Psoas muscle (tissue), 8 donors: ENCODE measurements at regions of chr19 and their contacts with region 1.

Region 1: DNA sequence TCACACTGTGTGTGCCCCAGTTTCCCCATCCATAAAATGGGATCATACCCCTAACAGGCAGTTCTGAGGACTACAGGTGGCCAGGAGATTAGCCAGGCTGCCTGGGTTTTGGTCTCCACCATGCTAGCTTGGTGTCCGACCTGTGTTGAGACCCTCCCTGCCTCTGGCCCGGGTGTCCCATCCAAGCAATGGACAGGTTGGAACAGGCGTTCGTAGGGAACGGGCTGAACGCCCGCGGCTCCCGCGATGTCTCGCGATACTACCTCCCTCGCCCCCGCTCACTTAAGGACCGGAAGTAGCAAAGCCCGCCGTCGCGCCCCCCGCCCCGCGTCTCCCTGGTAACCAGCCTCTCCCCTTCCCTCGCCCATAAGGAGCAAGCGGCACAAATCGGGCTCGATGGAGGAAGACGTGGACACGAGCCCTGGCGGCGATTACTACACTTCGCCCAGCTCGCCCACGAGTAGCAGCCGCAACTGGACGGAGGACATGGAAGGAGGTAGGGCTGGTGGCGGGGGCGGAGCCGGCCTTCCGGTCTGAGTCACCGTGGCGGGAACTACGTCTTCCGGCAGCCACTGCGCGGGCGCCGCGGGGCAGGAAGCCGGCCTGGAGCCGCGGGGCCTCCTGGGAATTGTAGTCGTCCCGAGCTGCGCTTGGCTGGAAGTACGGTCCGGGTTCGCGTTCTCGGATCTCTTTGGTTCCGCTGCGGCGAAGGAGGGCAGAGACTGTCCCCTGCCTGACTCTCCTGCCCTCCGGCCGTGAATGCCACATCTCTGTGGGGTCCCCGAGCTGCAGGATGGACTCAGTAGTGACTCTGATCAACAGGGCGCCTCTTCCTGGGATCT is 45.4 kb downstream of the SMIM24 start:
- DNase-seq: peak; percentile 97 to 99
- ATAC-seq: peak; percentile 89 to 97 (median 90)
- H3K4me3 ChIP-seq: peak overlapping the region; percentile 62
- H3K27ac ChIP-seq: peak overlapping the region; percentile 90
- H3K4me1 ChIP-seq: peaks cover 34% of the 10 kb centered on the region
- H3K27me3 ChIP-seq: no peaks in the 10 kb centered on the region
- CTCF ChIP-seq: no peak

Region 2: DNA sequence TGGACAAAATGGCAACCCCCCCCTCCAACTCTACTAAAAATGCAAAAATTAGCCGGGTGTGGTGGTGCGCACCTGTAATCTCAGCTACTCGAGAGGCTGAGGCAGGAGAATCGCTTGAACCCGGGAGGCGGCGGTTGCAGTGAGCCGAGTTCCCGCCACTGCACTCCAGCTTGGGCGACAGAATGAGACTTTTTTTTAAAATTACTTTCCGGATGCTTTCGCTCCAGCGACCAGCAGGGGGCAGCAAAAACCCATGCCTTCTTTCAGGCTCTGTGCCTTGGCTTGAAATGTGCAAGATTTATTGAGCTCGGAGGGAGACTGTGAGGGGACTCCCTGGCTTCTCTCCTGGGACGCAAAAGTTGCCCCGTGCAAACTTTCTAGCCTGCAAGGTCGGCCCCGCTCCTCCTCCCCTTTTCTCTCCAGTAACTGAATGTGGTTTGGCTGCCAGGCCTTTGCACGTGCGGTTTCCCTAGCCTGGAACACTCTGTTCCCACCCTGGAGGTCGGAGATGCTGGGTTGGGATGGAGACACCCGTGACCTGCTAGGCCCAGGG is 130.0 kb before region 1 on chr19:
- intact Hi-C with region 1: no loop called
- DNase-seq: peak; percentile 61 to 87
- ATAC-seq: peak; percentile 54 to 85 (median 64)
- H3K4me3 ChIP-seq: no peak overlapping the region
- H3K27ac ChIP-seq: no peak overlapping the region
- H3K4me1 ChIP-seq: no peaks in the 10 kb centered on the region
- H3K27me3 ChIP-seq: peaks cover 3 to 59% (median 6%) of the 10 kb centered on the region in 3 donors
- CTCF ChIP-seq: peak; percentile 87

Region 3: DNA sequence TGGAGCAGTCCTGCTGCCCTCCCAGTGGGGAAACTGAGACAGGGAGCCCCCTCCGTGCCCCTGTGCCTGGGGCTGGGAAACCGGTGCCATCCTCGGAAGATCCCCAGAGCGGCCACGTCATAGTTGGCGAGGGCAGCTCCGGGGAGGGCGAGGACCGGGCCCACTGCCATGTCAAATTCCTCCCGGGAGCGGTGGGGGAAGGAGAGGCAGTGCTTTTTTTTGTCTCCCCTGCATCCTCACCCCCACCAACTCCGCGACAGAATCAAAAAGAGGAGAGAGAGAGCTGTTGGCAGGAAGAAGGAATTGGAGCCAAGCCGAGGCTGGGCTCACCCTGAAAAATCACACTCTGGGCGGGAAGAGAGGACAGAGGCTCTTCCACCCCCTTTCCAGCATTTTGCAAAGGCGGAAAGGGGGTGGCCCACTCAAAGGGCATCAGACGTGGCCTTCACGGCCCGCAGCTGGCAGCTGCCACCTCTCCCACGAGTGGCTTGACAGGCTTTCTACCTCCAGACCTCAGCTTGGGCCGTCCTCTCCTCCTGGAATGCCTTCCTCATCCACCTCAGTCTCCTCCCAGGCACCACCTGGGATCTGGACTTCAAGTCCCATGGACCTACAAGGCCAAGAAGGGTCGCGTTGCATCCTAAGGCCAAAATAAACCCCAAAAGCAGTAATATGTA is 88.1 kb before region 1 on chr19:
- intact Hi-C with region 1: loop called (anchors 5 kb)
- DNase-seq: peak; percentile 81 to 89
- ATAC-seq: peak; percentile 22 to 61 (median 38)
- H3K4me3 ChIP-seq: no peak overlapping the region
- H3K27ac ChIP-seq: peak overlapping the region; percentile 53
- H3K4me1 ChIP-seq: peaks cover 23% of the 10 kb centered on the region
- H3K27me3 ChIP-seq: no peaks in the 10 kb centered on the region
- CTCF ChIP-seq: no peak

Region 4: DNA sequence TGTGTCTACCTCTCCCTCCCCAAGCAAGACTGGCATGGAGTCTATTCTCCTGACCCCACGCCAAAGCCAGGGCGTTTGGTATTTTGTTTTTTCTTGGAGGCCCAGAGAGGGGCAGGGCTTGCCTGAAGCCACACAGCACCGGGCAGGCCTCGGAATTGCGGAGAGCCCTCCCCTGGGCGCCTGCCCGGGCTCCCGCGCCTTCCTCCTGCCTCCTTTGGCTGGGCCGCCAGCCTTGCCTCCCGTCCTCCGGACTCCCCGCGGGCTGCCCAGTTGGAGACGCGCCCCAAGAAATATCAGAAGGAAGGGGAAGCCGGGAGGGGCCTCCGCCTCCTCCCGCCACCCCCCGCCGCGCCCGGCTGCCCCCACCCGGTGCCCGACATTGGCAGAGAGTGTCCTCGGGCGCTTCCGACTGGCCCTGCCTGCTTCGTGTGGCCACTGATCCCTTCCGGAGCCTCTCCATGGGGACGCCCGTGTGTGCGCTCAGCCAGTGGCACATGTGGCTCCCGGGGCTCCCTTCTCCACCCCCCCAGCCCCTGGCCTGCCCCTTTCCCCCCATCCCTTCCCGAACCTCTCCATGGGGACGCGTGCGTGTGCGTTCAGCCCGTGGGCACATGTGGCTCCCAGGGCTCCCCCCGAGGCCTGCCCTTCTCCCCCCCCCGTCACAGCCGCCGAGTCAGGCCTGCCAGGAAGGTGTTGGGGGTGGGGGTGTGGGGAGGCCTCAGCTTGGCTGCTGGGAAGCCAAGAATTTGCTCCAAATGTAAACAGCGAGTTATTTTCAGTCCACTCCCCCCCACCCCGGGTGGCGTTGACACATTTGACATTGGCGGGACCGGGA is 31.2 kb before region 1 on chr19:
- intact Hi-C with region 1: loop called in 1 of 2 experiments (anchors 5 kb)
- DNase-seq: peak; percentile 93 to 95
- ATAC-seq: peak; percentile 63 to 73 (median 72)
- H3K4me3 ChIP-seq: peak overlapping the region; percentile 68
- H3K27ac ChIP-seq: peak overlapping the region; percentile 100
- H3K4me1 ChIP-seq: peaks cover 68% of the 10 kb centered on the region
- H3K27me3 ChIP-seq: no peaks in the 10 kb centered on the region
- CTCF ChIP-seq: no peak

Region 5: GRCh38 chr19:3494051-3494450 is 59.1 kb after region 1 on chr19:
- intact Hi-C with region 1: no loop called
- DNase-seq: no peak
- ATAC-seq: peak in 3 of 4 donors; percentile 51 to 63 (median 58)
- H3K4me3 ChIP-seq: no peak overlapping the region
- H3K27ac ChIP-seq: no peak overlapping the region
- H3K4me1 ChIP-seq: peaks cover 1% of the 10 kb centered on the region
- H3K27me3 ChIP-seq: no peaks in the 10 kb centered on the region
- CTCF ChIP-seq: no peak